ENCODE measurements at regions of chr1 and their contacts with region 1.

Region 1: DNA sequence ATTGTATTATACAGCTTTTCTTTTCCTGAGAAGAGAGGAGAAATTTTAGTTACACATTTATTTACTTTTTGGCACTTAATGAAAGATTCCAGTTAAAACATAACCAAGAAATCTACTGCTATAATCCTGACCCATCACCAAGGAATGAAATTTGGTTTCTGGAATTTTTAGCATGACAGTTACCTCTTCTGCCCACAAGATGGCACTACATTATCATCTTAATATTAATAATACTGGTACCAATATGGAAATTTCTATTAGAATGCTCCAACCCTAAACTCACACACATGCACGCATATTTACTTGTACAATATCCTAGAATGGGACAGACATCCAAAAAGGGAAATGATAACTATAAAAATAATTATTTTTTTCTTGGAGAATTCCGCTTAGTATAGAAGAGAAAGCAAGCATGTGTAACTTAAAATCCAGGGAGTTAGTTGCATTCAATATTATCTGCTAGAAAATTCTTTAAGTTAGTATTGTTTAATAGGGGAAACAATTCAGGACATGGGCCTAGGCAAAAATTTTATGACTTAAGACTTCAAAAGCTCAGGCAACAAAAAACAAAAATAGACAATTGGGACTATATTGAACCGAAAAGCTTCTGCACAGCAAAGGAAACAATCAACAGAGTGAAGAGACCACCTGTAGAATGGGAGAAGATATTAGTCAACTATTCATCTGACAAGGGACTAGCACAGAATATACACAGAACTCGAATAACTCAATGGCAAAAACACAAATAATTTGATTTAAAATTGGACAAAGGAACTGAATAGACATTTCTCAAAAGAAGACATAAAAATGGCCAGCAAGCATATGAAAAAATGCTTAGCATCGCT is 37.4 kb downstream of the MAP3K21 start:
- DNase-seq: peak; percentile 34
- H3K4me3 ChIP-seq: no peak overlapping the region
- H3K27ac ChIP-seq: no peak overlapping the region
- H3K4me1 ChIP-seq: no peaks in the 10 kb centered on the region
- H3K27me3 ChIP-seq: no peaks in the 10 kb centered on the region
- CTCF ChIP-seq: peak; percentile 82
- EP300 ChIP-seq: no peak
- RAD21 ChIP-seq: peak; percentile 74

Region 2: DNA sequence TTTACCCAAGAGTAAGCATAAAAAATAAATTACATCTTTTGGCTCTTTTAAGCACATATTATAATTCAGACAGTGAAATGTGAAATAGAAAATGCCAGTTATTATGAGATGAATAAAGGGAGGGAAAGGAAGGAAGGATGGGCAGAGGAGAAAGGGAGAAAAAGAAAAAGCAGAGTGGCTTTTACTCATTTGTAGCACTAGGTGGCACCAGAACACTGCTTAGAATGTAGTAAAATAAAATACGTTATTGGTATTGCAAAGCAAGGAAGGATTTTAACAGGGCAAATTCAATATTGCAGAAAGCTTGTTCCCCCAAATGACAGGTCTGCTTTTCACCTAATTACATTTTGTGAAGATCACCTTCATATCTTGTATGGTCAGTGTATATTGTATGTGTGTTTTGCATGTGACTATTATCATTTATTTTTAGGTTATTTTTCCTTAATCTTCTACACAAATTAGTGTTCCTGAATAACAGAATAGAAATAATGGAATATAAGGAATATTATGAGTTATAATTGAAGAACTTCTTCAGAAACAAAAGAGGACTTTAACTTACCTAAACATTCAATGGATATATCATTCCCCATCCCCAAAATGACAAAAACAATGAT is 60.3 kb before region 1 on chr1:
- CTCF ChIA-PET with region 1: interaction called, 18 read pairs
- POLR2A ChIA-PET with region 1: no interaction called
- DNase-seq: peak; percentile 29
- H3K4me3 ChIP-seq: no peak overlapping the region
- H3K27ac ChIP-seq: no peak overlapping the region
- H3K4me1 ChIP-seq: no peaks in the 10 kb centered on the region
- H3K27me3 ChIP-seq: no peaks in the 10 kb centered on the region
- CTCF ChIP-seq: peak; percentile 78
- EP300 ChIP-seq: no peak
- RAD21 ChIP-seq: peak; percentile 92

Region 3: GRCh38 chr1:233376382-233377110 is 11.6 kb after region 1 on chr1:
- CTCF ChIA-PET with region 1: interaction called, 19 read pairs
- POLR2A ChIA-PET with region 1: interaction called, 3 read pairs
- DNase-seq: no peak
- H3K4me3 ChIP-seq: no peak overlapping the region
- H3K27ac ChIP-seq: no peak overlapping the region
- H3K4me1 ChIP-seq: no peaks in the 10 kb centered on the region; a peak in 1 of 4 replicates
- H3K27me3 ChIP-seq: no peaks in the 10 kb centered on the region
- CTCF ChIP-seq: no peak
- EP300 ChIP-seq: no peak
- RAD21 ChIP-seq: no peak

Region 4: GRCh38 chr1:233381778-233382177 is 16.9 kb after region 1 on chr1:
- CTCF ChIA-PET with region 1: interaction called, 19 read pairs
- POLR2A ChIA-PET with region 1: no interaction called
- DNase-seq: no peak
- H3K4me3 ChIP-seq: no peak overlapping the region
- H3K27ac ChIP-seq: no peak overlapping the region
- H3K4me1 ChIP-seq: no peaks in the 10 kb centered on the region; a peak in 1 of 4 replicates
- H3K27me3 ChIP-seq: no peaks in the 10 kb centered on the region
- CTCF ChIP-seq: no peak
- EP300 ChIP-seq: no peak
- RAD21 ChIP-seq: no peak

Region 5: DNA sequence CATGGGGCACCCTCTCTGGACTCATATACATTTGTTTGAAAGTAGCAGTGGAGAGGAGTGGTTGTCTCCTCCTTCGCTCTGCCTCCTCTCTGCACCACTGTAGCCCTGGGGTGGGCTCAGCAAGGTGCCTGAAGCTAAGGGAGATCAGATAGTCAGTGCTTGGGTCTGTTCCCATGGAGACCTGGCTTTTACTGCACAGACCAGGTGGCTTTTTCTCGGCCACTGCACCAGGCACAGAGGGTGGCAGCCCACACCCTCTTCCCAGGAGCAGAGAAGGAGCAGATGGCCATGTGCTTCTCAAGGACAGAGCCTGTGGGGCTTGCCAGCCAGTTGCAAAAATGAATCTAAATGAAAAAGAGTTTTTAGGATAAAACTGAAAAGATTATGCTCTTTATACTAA is 125.6 kb after region 1 on chr1:
- CTCF ChIA-PET with region 1: no interaction called
- POLR2A ChIA-PET with region 1: no interaction called
- DNase-seq: no peak
- H3K4me3 ChIP-seq: no peak overlapping the region
- H3K27ac ChIP-seq: no peak overlapping the region
- H3K4me1 ChIP-seq: peaks cover 0 to 4% of the 10 kb centered on the region in 2 experiments; a peak in 1 of 4 replicates
- H3K27me3 ChIP-seq: no peaks in the 10 kb centered on the region
- CTCF ChIP-seq: no peak
- EP300 ChIP-seq: no peak
- RAD21 ChIP-seq: no peak

Region 6: DNA sequence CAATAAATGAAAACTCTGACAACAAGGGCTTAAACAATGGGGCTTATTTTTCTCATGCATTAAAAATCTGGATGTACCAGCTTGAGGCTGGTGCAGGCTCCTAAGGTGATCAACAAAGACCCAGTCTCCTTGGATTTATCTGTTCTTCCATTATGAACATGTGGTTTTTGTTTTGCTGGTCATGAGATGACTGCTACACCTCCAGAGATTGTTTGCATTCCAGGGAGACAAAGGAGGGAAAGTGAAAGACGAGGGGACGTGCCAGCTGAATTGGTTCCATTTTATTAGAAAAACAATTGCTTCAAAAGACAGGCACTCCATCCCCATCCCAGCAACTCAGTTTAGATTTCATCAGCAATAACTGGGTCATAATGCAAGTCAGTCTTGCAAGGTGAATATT is 158.1 kb after region 1 on chr1:
- CTCF ChIA-PET with region 1: no interaction called
- POLR2A ChIA-PET with region 1: no interaction called
- DNase-seq: no peak
- H3K4me3 ChIP-seq: no peak overlapping the region
- H3K27ac ChIP-seq: no peak overlapping the region
- H3K4me1 ChIP-seq: no peaks in the 10 kb centered on the region
- H3K27me3 ChIP-seq: no peaks in the 10 kb centered on the region
- CTCF ChIP-seq: no peak
- EP300 ChIP-seq: no peak
- RAD21 ChIP-seq: no peak